AG04449 (cell line): ENCODE measurements at regions of chr9 and their contacts with region 1.

Region 1: DNA sequence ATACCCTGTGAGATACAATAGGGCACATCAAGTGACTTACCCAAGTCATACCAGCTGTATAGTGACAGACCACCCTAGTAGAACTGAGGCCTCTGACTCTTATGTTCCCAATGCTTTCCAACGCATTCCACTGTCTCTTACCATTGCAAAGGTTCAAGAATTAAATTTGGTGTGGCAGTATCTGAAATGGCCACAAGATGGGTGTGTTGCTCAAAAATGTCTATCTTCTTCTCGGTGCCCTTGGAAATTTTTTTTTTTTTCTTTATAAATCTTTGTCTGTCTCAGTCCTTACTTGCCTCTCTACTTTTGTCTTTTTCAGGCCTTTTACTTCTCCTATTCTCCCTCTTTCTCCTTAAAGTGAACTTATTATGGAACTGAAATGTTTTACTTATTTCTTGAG is 48.4 kb downstream of the GPR21 start:
- DNase-seq: no peak
- H3K4me3 ChIP-seq: no peak overlapping the region
- CTCF ChIP-seq: peak; percentile 51

Region 2: GRCh38 chr9:122883125-122883524 is 198.7 kb before region 1 on chr9:
- CTCF ChIA-PET with region 1: no interaction called
- POLR2A ChIA-PET with region 1: no interaction called
- DNase-seq: no peak
- H3K4me3 ChIP-seq: no peak overlapping the region
- CTCF ChIP-seq: no peak

Region 3: GRCh38 chr9:123069010-123069481 is 12.8 kb before region 1 on chr9:
- CTCF ChIA-PET with region 1: interaction called, 13 read pairs
- POLR2A ChIA-PET with region 1: no interaction called
- DNase-seq: peak; percentile 95
- H3K4me3 ChIP-seq: no peak overlapping the region
- CTCF ChIP-seq: no peak

Region 4: GRCh38 chr9:123102375-123103110 is 20.7 kb after region 1 on chr9:
- CTCF ChIA-PET with region 1: interaction called, 10 read pairs
- POLR2A ChIA-PET with region 1: no interaction called
- DNase-seq: peak; percentile 16
- H3K4me3 ChIP-seq: no peak overlapping the region
- CTCF ChIP-seq: peak; percentile 17

Region 5: GRCh38 chr9:123225374-123225813 is 143.6 kb after region 1 on chr9:
- CTCF ChIA-PET with region 1: interaction called, 36 read pairs
- POLR2A ChIA-PET with region 1: no interaction called
- DNase-seq: peak; percentile 36
- H3K4me3 ChIP-seq: no peak overlapping the region
- CTCF ChIP-seq: peak; percentile 57

Region 6: GRCh38 chr9:123338710-123339665 is 257.2 kb after region 1 on chr9:
- CTCF ChIA-PET with region 1: interaction called, 35 read pairs
- POLR2A ChIA-PET with region 1: interaction called, 3 read pairs
- DNase-seq: no peak
- H3K4me3 ChIP-seq: no peak overlapping the region
- CTCF ChIP-seq: no peak